Endothelial cell of umbilical vein (primary cell): ENCODE measurements at regions of chr6 and their contacts with region 1.

Region 1: DNA sequence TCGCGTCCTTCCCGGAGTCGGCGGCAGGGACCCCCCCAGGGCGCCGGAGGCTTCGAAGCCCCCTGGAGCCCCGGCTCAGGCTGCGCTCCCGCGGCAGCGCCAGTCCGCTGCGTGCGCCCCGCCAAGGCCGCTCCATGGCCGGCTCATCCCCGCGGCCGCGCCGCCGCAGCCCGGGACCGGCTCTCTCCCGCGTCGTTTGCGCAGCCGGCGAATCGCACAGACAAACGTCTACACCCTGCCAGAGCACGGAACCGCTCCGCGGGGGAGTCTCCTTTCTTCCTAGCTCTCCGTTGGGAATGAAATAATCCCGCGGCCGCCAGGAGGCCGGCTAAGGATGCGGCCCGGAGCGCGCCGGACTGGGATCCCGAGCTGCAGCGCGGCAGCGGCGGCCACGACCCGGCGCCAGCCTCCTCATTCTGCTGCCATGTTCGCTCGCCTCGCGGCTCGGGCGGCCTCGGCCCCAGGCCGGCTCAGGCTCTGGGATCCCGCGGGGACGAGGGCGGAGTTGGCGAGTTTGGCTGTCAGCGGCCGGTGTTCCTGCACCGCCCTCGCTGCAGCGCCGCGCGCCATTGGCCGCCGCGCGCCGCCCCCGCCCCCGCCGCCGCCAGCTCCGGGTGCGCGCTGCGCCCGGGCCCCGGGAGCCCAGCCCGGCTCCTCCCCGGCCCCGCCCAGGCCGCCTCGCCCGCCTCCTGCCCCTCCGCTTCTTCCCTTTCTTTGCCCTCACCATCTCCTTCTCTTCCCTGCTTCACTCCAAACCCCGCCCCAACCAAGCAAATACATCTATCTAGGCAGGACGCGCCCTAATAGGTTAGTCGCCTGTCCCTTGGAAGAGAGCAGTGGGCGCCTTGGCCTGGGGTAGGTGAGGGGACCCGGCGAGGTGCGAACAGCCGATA is at the start of gene GFOD1:
- DNase-seq: peak; percentile 84
- H3K4me3 ChIP-seq: peak within 1 kb of the TSS; percentile 56 to 79 (median 62)
- H3K27ac ChIP-seq: peak within 1 kb of the TSS; percentile 29
- H3K4me1 ChIP-seq: peaks cover 23% of the 10 kb centered on the region
- H3K27me3 ChIP-seq: no peaks in the 10 kb centered on the region
- CTCF ChIP-seq: peak; percentile 14 to 34
- POLR2A ChIP-seq: peak; percentile 90
- total RNA-seq, gene GFOD1: 24.1 and 26.3 TPM in 2 replicates

Region 2: GRCh38 chr6:13328076-13328874 is 159.1 kb before region 1 on chr6 and contains the start of gene TBC1D7:
- CTCF ChIA-PET with region 1: interaction called, 10 read pairs
- POLR2A ChIA-PET with region 1: no interaction called
- dilution Hi-C with region 1: no loop called
- intact Hi-C with region 1: no loop called
- DNase-seq: peak; percentile 94
- H3K4me3 ChIP-seq: peak within 1 kb of the TSS; percentile 76 to 92 (median 87)
- H3K27ac ChIP-seq: peak within 1 kb of the TSS; percentile 92
- H3K4me1 ChIP-seq: peaks cover 16% of the 10 kb centered on the region
- H3K27me3 ChIP-seq: no peaks in the 10 kb centered on the region
- CTCF ChIP-seq: no peak
- POLR2A ChIP-seq: peak; percentile 94
- total RNA-seq, gene TBC1D7: 26.6 and 28.1 TPM in 2 replicates

Region 3: DNA sequence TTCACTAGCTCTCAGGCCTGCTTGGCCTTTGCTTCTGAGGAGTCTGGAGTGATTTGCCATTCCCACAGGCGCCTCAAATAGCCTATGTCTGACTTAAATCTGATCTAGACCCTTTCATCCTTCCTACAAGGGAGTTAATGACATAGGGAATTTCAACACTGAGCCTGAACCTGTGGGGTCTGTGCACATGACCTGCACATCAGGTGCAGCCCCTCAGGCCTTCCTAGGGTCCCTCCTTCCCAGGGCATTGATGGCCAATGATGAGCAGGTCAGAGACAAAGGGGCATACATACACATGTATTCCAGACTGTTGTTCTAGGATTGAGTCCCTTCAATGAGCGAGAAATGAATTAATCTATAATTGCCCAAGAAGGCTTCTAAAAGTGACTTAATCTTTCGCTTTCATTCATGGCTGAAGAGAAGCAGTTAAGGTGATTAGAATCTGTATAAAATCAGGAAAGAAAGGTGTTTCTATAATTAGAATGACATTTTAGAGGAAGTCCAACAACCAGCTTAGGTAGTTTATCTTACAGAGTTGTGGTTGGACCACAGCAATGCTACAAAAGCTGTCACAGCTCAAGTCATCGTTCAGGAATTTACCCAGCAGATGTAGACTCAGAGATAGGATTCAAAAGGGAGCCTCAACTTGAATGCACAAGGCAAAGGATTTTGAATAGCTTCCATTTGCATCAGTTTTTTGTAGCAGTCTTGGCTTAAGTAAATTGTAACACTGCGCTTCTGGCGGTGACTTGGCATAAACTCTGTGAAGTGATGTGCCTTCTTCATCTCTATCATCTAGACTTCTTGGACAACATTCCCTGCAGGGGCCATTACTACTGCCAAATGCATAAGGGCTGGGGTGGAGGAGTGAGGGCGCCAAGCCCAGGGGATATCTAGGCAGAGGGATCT is 132.1 kb before region 1 on chr6:
- CTCF ChIA-PET with region 1: interaction called, 4 read pairs
- POLR2A ChIA-PET with region 1: no interaction called
- dilution Hi-C with region 1: no loop called
- intact Hi-C with region 1: loop called (anchors 1 kb)
- DNase-seq: peak; percentile 69
- H3K4me3 ChIP-seq: no peak overlapping the region
- H3K27ac ChIP-seq: peak overlapping the region; percentile 89
- H3K4me1 ChIP-seq: peaks cover 28% of the 10 kb centered on the region
- H3K27me3 ChIP-seq: no peaks in the 10 kb centered on the region
- CTCF ChIP-seq: no peak
- POLR2A ChIP-seq: no peak

Region 4: GRCh38 chr6:13395272-13396237 is 91.8 kb before region 1 on chr6:
- CTCF ChIA-PET with region 1: no interaction called
- POLR2A ChIA-PET with region 1: interaction called, 3 read pairs
- dilution Hi-C with region 1: no loop called
- intact Hi-C with region 1: loop called (anchors 1 kb)
- DNase-seq: peak; percentile 100
- H3K4me3 ChIP-seq: no peak overlapping the region
- H3K27ac ChIP-seq: peak overlapping the region; percentile 92
- H3K4me1 ChIP-seq: peaks cover 19% of the 10 kb centered on the region
- H3K27me3 ChIP-seq: no peaks in the 10 kb centered on the region
- CTCF ChIP-seq: no peak
- POLR2A ChIP-seq: peak; percentile 65

Region 5: GRCh38 chr6:13454286-13455221 is 32.8 kb before region 1 on chr6:
- CTCF ChIA-PET with region 1: interaction called, 3 read pairs
- POLR2A ChIA-PET with region 1: interaction called, 3 read pairs
- dilution Hi-C with region 1: no loop called
- intact Hi-C with region 1: loop called (anchors 2 kb)
- DNase-seq: peak; percentile 32
- H3K4me3 ChIP-seq: no peak overlapping the region
- H3K27ac ChIP-seq: peak overlapping the region; percentile 2
- H3K4me1 ChIP-seq: peaks cover 11% of the 10 kb centered on the region
- H3K27me3 ChIP-seq: no peaks in the 10 kb centered on the region
- CTCF ChIP-seq: no peak
- POLR2A ChIP-seq: no peak

Region 6: DNA sequence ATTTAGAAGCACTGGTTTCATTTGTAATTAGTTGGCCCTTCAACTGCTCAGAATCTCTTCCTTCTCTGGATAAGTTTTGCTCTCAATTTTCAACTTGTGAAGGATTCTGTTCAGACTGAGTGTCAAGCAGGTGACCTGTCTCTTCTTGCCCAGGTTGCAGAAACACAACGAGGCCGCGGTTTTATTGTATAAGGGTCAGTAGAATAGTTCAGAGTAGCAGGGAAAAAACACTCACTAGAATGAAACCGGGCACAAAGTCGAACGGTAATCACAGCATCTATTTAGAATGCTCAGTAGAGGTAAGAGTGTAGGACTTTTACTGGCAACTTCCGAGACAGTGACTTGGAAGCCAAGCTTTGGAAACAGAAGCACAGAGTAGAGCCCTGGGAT is 18.0 kb after region 1 on chr6:
- CTCF ChIA-PET with region 1: no interaction called
- POLR2A ChIA-PET with region 1: no interaction called
- dilution Hi-C with region 1: no loop called
- intact Hi-C with region 1: no loop called
- DNase-seq: no peak
- H3K4me3 ChIP-seq: no peak overlapping the region
- H3K27ac ChIP-seq: no peak overlapping the region
- H3K4me1 ChIP-seq: peaks cover 13% of the 10 kb centered on the region
- H3K27me3 ChIP-seq: no peaks in the 10 kb centered on the region
- CTCF ChIP-seq: no peak
- POLR2A ChIP-seq: no peak

Region 7: DNA sequence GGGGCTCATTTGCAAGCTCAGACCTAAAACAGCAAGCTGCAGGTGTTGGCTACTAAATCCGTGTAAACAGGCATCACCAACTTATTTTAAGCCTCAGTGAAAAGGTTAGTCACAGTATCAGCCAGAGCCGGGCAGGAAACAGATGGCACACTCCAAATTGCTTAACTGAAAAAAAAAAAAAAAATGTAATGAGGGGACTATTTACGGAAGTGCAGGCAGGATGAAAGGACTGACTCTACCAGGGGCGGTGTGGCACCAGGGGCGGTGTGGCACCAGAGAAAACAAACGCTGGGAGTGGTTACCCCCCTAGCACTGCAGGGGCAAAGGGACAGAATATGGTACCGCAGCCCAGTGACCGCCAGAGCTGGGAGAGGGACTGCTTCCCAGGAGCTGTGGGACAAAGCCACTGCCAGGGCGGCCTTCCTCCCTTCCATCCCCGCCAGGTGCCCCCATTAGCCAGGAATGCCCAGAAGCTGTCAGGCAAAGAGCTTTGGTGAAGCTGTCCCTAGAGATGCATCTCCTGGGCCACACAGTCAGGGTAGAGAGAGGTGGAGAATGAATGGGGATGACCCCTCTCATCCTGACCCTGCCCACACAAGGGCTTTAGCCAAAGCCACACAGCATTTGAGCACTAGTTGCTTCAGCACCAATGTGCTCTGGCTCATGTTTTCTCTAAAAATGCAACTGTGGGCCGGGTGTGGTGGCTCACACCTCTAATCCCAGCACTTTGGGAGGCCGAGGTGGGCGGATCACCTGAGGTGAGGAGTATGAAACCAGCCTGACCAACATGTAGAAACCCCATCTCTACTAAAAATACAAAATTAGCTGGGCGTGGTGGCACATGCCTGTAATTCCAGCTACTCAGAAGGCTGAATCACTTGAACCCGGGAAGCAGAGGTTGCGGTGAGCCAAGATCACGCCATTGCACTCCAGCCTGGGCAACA is 39.6 kb after region 1 on chr6:
- CTCF ChIA-PET with region 1: interaction called, 10 read pairs
- POLR2A ChIA-PET with region 1: no interaction called
- dilution Hi-C with region 1: no loop called
- intact Hi-C with region 1: loop called (anchors 1 kb)
- DNase-seq: peak; percentile 94
- H3K4me3 ChIP-seq: no peak overlapping the region
- H3K27ac ChIP-seq: peak overlapping the region; percentile 65
- H3K4me1 ChIP-seq: peaks cover 37% of the 10 kb centered on the region
- H3K27me3 ChIP-seq: no peaks in the 10 kb centered on the region
- CTCF ChIP-seq: no peak
- POLR2A ChIP-seq: peak; percentile 63

Region 8: GRCh38 chr6:13614926-13615798 is 127.8 kb after region 1 on chr6 and contains the start of gene NOL7:
- CTCF ChIA-PET with region 1: interaction called, 20 read pairs
- POLR2A ChIA-PET with region 1: interaction called, 6 read pairs
- dilution Hi-C with region 1: no loop called
- intact Hi-C with region 1: loop called (anchors 1 kb)
- DNase-seq: peak; percentile 98
- H3K4me3 ChIP-seq: peak within 1 kb of the TSS; percentile 89 to 99 (median 98)
- H3K27ac ChIP-seq: peak within 1 kb of the TSS; percentile 78
- H3K4me1 ChIP-seq: peaks cover 17% of the 10 kb centered on the region
- H3K27me3 ChIP-seq: no peaks in the 10 kb centered on the region
- CTCF ChIP-seq: peak; percentile 97 to 98
- POLR2A ChIP-seq: peak; percentile 67
- total RNA-seq, gene NOL7: 75.6 and 80.0 TPM in 2 replicates